Breast epithelium (tissue), 4 donors: ENCODE measurements at regions of chr1 and their contacts with region 1.

Region 1: GRCh38 chr1:117615474-117615873 is 9.6 kb downstream of the TENT5C start:
- DNase-seq: no peak
- H3K4me3 ChIP-seq: no peak overlapping the region
- H3K27ac ChIP-seq: no peak overlapping the region
- H3K4me1 ChIP-seq: no peaks in the 10 kb centered on the region
- H3K27me3 ChIP-seq: no peaks in the 10 kb centered on the region
- CTCF ChIP-seq: no peak
- POLR2A ChIP-seq: no peak

Region 2: DNA sequence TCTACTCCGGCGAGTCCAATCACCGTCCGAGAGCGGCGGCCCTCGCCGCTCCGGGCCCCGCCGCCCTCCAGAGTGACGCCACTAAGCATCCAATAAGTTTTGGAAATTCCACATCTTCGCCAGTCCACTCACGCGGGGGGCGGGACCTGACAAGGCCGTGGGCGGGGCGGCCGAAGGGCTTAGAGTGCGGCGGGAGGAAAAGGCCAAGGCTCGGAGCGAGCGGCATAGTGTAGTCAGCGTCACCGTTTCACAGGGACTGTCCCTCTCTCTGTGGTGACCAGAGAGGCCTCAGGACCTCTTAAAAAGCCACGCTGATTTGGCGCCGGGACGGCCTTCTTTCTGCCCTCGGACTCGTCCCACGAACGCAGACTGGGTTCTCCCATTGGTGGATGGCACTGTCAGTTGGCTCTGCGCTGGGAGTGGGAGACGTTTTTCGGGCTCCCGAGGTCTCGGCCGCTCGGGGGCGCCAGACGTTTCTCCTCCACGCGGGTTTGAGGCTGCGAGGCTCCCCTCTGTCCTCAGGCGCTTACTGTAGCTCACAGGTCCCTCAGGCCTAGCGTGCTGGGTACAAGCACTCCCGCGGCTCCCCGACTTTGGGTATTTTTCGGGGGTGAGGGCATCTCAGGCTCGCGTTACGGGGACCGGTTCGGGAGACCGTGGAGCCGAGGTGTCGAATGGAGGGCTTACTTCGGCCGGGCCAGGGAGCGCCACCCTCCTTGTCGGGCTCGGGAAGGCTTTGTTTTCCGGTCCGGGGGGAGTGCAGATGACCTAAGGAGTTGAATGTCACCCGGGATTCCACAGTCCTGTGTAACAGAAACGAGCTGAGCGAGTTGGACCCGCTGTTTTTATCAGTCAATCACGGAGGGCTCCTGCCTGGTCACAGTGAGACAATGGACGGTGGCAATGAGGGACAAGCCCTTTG is 493.4 kb before region 1 on chr1:
- intact Hi-C with region 1: loop called (anchors 5 kb)
- DNase-seq: peak; percentile 93 to 95
- H3K4me3 ChIP-seq: peak overlapping the region; percentile 70 to 87 (median 76)
- H3K27ac ChIP-seq: peak overlapping the region; percentile 94 to 96
- H3K4me1 ChIP-seq: peaks cover 3 to 7% of the 10 kb centered on the region in 2 donors
- H3K27me3 ChIP-seq: no peaks in the 10 kb centered on the region
- CTCF ChIP-seq: peak; percentile 55 to 81 (median 61)
- POLR2A ChIP-seq: peak; percentile 7